Endothelial cell of umbilical vein (primary cell): ENCODE measurements at regions of chr5 and their contacts with region 1.

Region 1: GRCh38 chr5:140157032-140157803 is 17.8 kb upstream of the CYSTM1 start:
- DNase-seq: peak; percentile 75
- H3K4me3 ChIP-seq: peak overlapping the region in 2 of 3 experiments; percentile 19 to 24
- H3K27ac ChIP-seq: no peak overlapping the region
- H3K4me1 ChIP-seq: peaks cover 4% of the 10 kb centered on the region
- H3K27me3 ChIP-seq: no peaks in the 10 kb centered on the region
- CTCF ChIP-seq: peak; percentile 81 to 86
- POLR2A ChIP-seq: no peak

Region 2: GRCh38 chr5:139844472-139845145 is 312.6 kb before region 1 on chr5:
- CTCF ChIA-PET with region 1: no interaction called
- POLR2A ChIA-PET with region 1: no interaction called
- dilution Hi-C with region 1: no loop called
- intact Hi-C with region 1: loop called (anchors 1 kb)
- DNase-seq: peak; percentile 62
- H3K4me3 ChIP-seq: no peak overlapping the region
- H3K27ac ChIP-seq: no peak overlapping the region
- H3K4me1 ChIP-seq: no peaks in the 10 kb centered on the region
- H3K27me3 ChIP-seq: peaks cover 4 to 7% of the 10 kb centered on the region in 2 experiments
- CTCF ChIP-seq: peak; percentile 83 to 94
- POLR2A ChIP-seq: no peak

Region 3: DNA sequence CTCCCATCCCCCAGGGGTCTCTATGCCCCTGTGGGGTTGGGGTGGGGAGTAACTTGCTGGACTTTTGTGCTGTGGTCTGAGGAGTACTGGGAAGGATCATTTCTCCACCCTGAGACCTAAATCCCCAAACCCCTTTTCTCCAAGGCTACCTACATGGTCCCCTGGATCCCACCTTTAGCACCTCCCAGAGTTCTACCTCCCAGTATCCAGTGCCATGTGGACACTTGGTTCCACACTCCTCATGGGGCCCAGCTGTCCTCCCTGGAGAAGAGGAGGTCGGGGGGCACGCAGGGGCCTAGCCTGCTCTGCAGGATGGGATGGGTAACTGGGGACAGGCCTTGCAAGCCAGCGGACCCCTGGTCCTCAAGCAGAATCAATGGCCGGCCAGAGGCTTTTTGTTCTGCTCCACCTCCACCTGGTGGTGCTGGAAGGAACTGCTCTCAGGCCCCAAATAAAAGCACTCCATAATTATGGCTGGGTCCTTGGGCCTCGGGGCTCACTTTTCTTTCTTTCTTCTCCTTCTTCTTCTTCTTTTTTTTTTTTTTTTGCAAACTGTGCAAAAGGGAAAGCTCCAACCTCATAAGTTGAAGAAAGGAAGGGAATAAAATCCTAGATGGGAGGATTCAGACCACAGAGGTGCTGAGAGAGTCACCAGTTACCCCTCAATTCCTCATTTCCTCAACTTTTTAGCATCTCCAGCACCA is 293.2 kb before region 1 on chr5:
- CTCF ChIA-PET with region 1: interaction called, 3 read pairs
- POLR2A ChIA-PET with region 1: no interaction called
- dilution Hi-C with region 1: no loop called
- intact Hi-C with region 1: loop called (anchors 5 kb)
- DNase-seq: peak; percentile 57
- H3K4me3 ChIP-seq: no peak overlapping the region
- H3K27ac ChIP-seq: no peak overlapping the region
- H3K4me1 ChIP-seq: no peaks in the 10 kb centered on the region
- H3K27me3 ChIP-seq: peaks cover 6 to 12% of the 10 kb centered on the region in 2 experiments
- CTCF ChIP-seq: peak; percentile 75 to 88
- POLR2A ChIP-seq: no peak

Region 4: GRCh38 chr5:140073296-140073695 is 83.9 kb before region 1 on chr5:
- CTCF ChIA-PET with region 1: interaction called, 141 read pairs
- POLR2A ChIA-PET with region 1: no interaction called
- dilution Hi-C with region 1: no loop called
- intact Hi-C with region 1: loop called (anchors 1 kb)
- DNase-seq: peak; percentile 31
- H3K4me3 ChIP-seq: no peak overlapping the region
- H3K27ac ChIP-seq: no peak overlapping the region
- H3K4me1 ChIP-seq: no peaks in the 10 kb centered on the region
- H3K27me3 ChIP-seq: peaks cover 11 to 31% of the 10 kb centered on the region in 2 experiments
- CTCF ChIP-seq: peak in 1 of 2 donors; percentile 28
- POLR2A ChIP-seq: no peak

Region 5: DNA sequence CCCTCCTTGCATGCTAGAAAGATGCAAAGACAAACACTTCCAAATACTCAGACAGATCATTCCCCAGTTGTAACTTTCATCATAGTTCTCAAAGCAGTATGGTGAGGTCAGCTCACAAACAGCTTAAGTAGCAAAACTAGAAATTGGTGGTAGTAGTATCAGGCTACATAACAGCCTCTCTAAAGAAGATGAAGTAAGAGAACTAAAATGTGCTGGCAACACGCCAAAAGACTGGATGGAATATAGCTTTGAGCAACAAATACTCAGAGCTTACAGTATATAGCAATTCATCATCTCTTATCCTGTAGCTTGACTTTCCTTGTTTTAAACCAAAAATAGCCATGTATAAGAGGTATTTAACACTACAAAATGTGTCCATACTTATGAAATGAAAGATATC is 138.2 kb after region 1 on chr5:
- CTCF ChIA-PET with region 1: no interaction called
- POLR2A ChIA-PET with region 1: no interaction called
- dilution Hi-C with region 1: no loop called
- intact Hi-C with region 1: no loop called
- DNase-seq: peak; percentile 96
- H3K4me3 ChIP-seq: no peak overlapping the region
- H3K27ac ChIP-seq: peak overlapping the region; percentile 85
- H3K4me1 ChIP-seq: peaks cover 77% of the 10 kb centered on the region
- H3K27me3 ChIP-seq: no peaks in the 10 kb centered on the region
- CTCF ChIP-seq: no peak
- POLR2A ChIP-seq: no peak

Region 6: GRCh38 chr5:140357726-140358093 is 200.5 kb after region 1 on chr5:
- CTCF ChIA-PET with region 1: interaction called, 3 read pairs
- POLR2A ChIA-PET with region 1: no interaction called
- dilution Hi-C with region 1: no loop called
- intact Hi-C with region 1: loop called (anchors 5 kb)
- DNase-seq: peak; percentile 88
- H3K4me3 ChIP-seq: no peak overlapping the region
- H3K27ac ChIP-seq: no peak overlapping the region
- H3K4me1 ChIP-seq: no peaks in the 10 kb centered on the region
- H3K27me3 ChIP-seq: no peaks in the 10 kb centered on the region
- CTCF ChIP-seq: peak; percentile 94 to 97
- POLR2A ChIP-seq: no peak